ENCODE measurements at regions of chr21 and their contacts with region 1.

Region 1: DNA sequence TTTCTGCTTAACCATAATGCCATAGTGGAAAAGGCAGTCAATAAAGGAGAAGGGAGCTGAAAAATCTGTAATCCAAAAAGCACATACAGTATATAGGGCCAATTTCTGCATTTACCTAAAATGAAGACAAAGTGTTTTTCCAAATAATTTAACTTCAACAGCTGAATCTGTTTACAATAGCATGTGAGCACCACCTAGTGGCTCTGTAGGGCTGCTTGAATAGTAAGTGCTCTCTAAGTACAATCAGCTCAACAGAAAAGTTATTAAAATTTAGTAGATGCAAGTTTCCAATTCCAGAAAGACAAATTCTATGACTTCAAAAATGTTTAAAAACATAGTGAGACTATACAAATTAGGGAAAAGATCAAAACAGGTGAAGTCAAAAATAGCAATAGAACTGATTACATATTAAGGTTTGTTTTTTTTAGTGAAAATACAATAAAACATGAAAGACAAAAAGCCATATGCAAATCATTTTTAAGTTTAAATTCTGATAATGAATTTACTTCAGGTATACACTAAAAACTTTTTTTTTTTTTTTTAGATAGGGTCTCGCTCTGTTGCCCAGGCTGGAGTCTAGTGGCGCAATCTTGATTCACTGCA is 220.0 kb downstream of the SETD4 start:
- DNase-seq: peak; percentile 69
- H3K4me3 Mint-ChIP-seq: no peak overlapping the region
- H3K27ac Mint-ChIP-seq: no peak overlapping the region
- H3K4me1 Mint-ChIP-seq: no peaks in the 10 kb centered on the region
- H3K27me3 Mint-ChIP-seq: peaks cover 11% of the 10 kb centered on the region

Region 2: DNA sequence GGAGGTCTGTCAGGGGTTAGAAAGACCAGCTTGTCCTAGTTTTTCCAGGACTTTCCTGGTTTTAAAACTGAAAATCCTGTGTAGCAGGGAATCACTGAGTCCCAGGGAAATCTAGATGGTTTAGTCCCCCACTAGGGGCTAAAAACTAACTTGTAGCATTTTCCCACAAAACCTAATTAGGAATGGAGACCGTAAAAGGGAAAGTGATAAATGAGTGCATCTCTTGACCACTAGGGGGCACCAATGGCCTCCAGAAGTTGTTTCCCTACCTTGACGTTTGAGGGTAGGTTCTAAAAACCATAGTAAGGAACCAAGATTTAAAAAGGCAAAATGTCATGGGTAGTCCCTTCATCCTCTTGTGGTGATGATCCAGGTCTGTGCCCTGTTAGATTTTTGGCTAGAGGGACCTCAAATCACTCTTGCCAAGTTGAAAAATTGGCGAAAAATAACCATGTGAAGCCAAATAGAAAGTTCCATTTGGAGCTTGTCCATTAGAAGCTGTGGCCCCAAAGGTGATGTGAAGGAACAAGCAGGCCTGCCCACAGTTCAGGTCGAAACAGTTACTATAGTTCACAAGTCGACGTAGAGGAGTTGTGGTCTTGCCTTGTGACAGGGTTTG is 1147.0 kb before region 1 on chr21:
- CTCF ChIA-PET with region 1: interaction called, 17 read pairs
- DNase-seq: peak; percentile 61
- H3K4me3 Mint-ChIP-seq: no peak overlapping the region
- H3K27ac Mint-ChIP-seq: no peak overlapping the region
- H3K4me1 Mint-ChIP-seq: peaks cover 7% of the 10 kb centered on the region
- H3K27me3 Mint-ChIP-seq: peaks cover 49% of the 10 kb centered on the region

Measured in activated naive CD4-positive, alpha-beta T cell treated with anti-CD3 and anti-CD28 coated beads, Interleukin-2, amount 10 ng/mL, durations not matched to agents 7 days and 5 days (primary cell).